Activated CD4-positive, alpha-beta memory T cell treated with anti-CD3 and anti-CD28 coated beads for 36 hours (primary cell): ENCODE measurements at regions of chr3 and their contacts with region 1.

Region 1: DNA sequence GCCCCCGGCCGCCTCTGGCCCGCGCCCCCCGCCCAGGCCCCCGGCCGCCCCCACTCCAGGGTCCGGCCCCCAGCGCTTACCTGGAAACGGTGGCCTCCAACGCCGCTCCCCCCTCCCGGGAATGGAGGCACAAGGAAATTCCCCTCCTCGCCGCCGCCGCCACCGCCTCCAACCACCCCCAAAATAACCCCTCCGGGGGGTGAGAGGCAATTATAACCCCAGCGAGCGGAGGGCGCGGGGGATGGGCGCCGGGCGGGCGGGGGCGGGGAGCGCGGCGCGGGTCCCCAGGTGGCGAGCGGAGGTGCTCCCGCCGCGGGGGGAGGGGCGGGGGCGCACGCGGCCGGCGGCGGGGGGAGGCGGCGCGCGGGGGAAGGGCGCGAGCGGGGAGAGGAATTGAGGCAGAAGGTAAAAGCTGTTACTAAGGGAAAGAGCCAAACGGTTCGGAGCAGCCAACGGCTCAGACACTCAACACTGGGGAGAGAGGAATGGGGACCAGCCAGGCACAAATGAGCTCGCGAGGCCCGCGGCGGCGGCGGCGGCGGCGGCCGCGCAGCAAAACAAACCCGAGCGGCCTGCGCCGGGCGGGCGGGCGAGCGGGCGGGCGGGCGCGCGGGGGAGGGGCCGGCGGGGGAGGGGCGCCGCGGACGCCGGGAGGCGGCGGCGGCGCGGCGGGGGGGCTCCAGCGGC is at the start of gene TBL1XR1:
- DNase-seq: peak; percentile 89
- H3K4me3 Mint-ChIP-seq: peak within 1 kb of the TSS; percentile 90
- H3K27ac Mint-ChIP-seq: peak within 1 kb of the TSS; percentile 99
- H3K4me1 Mint-ChIP-seq: peaks cover 51% of the 10 kb centered on the region
- H3K27me3 Mint-ChIP-seq: no peaks in the 10 kb centered on the region
- total RNA-seq, gene TBL1XR1: 158 to 167 TPM

Region 2: DNA sequence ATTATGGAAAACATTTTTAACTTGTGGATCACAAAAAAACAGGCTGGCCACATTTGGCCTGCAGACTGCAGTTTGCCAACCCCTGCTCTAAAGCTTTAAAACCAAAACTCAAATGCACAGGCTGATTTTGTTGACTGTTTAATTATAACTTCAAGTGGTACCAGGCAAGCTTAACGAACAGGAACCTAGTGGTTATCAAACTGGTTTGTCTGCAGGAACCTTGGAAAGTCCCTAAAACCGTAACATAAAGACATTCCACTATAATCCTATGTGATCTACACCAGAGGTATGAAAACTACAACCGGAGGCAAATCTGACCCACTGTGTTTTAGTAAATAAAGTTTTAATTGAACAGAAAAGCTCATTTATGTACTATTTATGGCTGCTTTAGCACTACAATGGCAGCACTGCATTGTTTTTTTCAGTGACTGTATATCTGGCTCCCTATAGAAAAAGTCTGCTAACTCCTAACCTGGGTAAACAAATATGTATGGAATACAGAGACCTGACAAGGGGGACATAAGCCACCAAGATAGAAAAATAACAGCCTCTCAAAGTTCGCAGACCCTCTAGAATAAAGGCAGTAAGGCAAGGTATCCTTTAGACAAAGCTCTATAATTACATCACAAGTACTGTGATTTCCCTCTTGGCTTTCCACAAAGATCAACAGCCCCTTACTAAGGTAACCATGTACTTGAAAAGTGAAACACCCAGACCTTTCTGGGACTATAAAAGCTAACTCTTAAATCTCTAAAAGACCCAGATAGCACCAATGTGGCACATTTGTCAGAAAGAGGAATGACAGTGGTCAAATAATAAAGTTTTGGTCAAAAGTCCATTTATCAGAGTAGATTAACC is 52.0 kb before region 1 on chr3:
- CTCF ChIA-PET with region 1: interaction called, 3 read pairs
- POLR2A ChIA-PET with region 1: interaction called, 4 read pairs
- intact Hi-C with region 1: loop called (anchors 1 kb)
- DNase-seq: no peak
- H3K4me3 Mint-ChIP-seq: peak overlapping the region; percentile 34
- H3K27ac Mint-ChIP-seq: peak overlapping the region; percentile 66
- H3K4me1 Mint-ChIP-seq: peaks cover 67% of the 10 kb centered on the region
- H3K27me3 Mint-ChIP-seq: no peaks in the 10 kb centered on the region

Region 3: DNA sequence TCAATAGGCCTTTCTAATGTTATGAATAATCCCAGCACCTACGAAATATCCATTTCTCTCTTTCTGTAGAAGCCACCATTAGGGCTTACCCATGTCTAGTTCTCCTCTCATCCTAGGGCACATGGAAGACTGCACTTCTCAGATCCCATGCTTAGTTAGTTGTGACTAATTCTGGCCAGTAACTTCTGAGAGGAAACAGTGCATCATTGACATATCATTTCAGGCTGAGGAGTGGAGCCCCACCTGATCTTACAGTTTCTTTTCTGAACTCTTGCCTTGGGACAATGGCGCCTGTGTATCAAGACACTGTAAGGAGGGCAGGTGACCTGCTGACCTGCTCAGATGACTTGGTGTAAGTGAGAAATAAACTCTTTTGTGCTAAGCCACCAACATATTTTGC is 39.5 kb after region 1 on chr3:
- CTCF ChIA-PET with region 1: no interaction called
- POLR2A ChIA-PET with region 1: no interaction called
- intact Hi-C with region 1: loop called (anchors 1 kb)
- DNase-seq: no peak
- H3K4me3 Mint-ChIP-seq: no peak overlapping the region
- H3K27ac Mint-ChIP-seq: no peak overlapping the region
- H3K4me1 Mint-ChIP-seq: peaks cover 11% of the 10 kb centered on the region
- H3K27me3 Mint-ChIP-seq: no peaks in the 10 kb centered on the region

Region 4: DNA sequence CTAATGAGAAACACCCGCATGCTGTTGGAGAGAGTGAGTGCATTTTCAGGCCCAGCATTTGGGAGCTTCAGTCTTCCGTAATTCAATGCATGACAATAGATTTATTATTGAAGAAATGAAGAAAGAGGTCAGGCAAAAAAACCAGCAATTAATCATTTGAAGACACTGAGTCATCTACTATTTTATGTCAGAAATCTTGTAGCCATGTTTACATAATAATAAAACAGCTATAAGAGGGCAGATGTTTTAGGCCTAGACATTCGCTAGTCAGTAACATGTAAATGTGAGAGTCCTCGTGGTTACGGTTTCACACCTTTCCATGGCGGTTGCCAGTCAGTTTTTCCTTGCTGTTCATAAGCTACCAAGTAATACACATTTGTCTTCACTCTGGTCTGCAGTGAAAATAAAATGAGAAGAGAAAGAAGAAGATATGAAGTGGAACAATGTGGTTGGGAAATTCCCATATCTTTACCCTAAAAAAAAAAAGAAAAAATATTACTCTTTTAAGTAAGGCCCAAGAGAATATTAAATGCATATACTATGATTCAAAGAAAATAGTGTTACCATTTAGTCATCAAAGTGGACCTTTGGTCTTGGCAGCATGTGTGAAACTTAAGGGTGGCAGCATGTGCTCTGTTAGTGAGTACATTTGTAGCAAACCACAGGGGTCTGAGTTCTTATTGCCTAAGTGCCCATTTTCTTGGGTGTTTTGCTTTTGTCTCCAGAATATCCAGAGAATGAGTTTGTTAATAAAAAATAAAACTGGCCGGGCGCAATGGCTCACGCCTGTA is 140.6 kb after region 1 on chr3:
- CTCF ChIA-PET with region 1: no interaction called
- POLR2A ChIA-PET with region 1: interaction called, 4 read pairs
- intact Hi-C with region 1: loop called (anchors 1 kb)
- DNase-seq: peak; percentile 91
- H3K4me3 Mint-ChIP-seq: no peak overlapping the region
- H3K27ac Mint-ChIP-seq: peak overlapping the region; percentile 77
- H3K4me1 Mint-ChIP-seq: peaks cover 29% of the 10 kb centered on the region
- H3K27me3 Mint-ChIP-seq: peaks cover 4% of the 10 kb centered on the region

Region 5: DNA sequence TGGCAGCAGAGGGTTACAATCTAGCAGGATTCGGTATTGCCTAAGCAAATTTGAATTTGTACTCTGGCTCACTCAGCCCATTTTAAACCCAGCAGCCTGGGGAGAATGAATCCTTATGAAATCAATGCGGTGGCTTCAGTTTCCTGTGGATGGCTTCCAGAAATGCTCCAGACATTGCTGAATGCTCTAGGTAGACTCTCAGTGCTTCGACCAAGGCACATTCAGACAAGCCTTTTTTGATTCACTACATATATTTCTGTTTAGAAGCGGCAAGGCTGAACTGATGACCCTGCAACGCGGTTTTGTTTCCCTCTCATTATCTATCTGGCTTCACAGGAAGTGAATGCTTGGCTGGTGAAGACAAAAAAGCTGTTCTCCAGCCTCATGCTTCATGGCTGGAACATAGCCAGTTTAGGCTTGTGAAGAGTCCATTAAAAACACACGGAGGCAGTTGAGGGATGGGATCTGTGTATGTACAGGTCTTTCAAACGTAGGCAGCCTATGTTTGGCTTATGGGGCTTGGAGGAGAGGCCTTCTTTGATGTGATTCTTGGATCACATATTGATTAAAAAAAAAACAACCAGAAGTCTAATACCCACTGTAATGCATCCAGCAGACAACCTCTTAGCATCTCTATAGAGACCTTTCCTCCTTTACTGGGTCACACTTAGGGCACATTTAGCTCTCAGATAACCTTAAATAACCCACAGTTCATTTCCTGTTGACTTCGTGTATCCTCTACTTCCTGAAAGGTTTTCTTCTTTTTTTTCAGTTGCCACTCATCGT is 400.3 kb after region 1 on chr3:
- CTCF ChIA-PET with region 1: no interaction called
- POLR2A ChIA-PET with region 1: no interaction called
- intact Hi-C with region 1: loop called (anchors 5 kb)
- DNase-seq: peak; percentile 56
- H3K4me3 Mint-ChIP-seq: peak overlapping the region; percentile 47
- H3K27ac Mint-ChIP-seq: peak overlapping the region; percentile 88
- H3K4me1 Mint-ChIP-seq: peaks cover 75% of the 10 kb centered on the region
- H3K27me3 Mint-ChIP-seq: no peaks in the 10 kb centered on the region

Region 6: GRCh38 chr3:177787279-177788041 is 590.3 kb after region 1 on chr3:
- CTCF ChIA-PET with region 1: no interaction called
- POLR2A ChIA-PET with region 1: no interaction called
- intact Hi-C with region 1: loop called (anchors 2 kb)
- DNase-seq: no peak
- H3K4me3 Mint-ChIP-seq: no peak overlapping the region
- H3K27ac Mint-ChIP-seq: no peak overlapping the region
- H3K4me1 Mint-ChIP-seq: peaks cover 16% of the 10 kb centered on the region
- H3K27me3 Mint-ChIP-seq: no peaks in the 10 kb centered on the region